Left lung (tissue), 14 donors: ENCODE measurements at regions of chr1 and their contacts with region 1.

Region 1: GRCh38 chr1:171984850-171985485 is 143.7 kb downstream of the DNM3 start:
- DNase-seq: peak in 2 of 4 donors; percentile 12 to 24
- ATAC-seq: peak; percentile 69
- H3K4me3 ChIP-seq: no peak overlapping the region
- H3K27ac ChIP-seq: no peak overlapping the region
- H3K4me1 ChIP-seq: no peaks in the 10 kb centered on the region
- H3K27me3 ChIP-seq: no peaks in the 10 kb centered on the region
- CTCF ChIP-seq: peak; percentile 58 to 71

Region 2: DNA sequence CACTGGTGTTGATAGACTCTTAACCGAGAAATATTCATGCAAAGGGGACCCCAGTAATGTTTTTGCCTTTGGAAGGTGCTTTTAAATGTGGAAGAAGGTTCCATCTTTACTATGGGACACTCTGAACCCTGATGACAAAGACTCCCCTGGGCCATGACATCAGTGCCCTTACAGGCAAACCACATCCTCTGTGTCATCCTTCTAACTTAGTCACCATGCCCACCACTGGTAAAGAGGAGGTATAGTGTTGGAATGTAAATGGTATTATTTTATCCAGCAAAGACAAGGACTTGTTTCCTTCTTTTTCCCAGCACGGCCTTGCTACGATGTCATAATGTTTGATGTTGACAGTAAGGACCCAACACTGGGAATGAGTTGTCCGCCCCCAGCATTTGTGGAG is 190.9 kb before region 1 on chr1:
- intact Hi-C with region 1: loop called in 1 of 2 experiments (anchors 10 kb)
- DNase-seq: no peak
- ATAC-seq: no peak
- H3K4me3 ChIP-seq: no peak overlapping the region
- H3K27ac ChIP-seq: no peak overlapping the region
- H3K4me1 ChIP-seq: no peaks in the 10 kb centered on the region
- H3K27me3 ChIP-seq: no peaks in the 10 kb centered on the region
- CTCF ChIP-seq: no peak

Region 3: GRCh38 chr1:171801487-171801891 is 183.5 kb before region 1 on chr1:
- intact Hi-C with region 1: loop called (anchors 5 to 10 kb)
- DNase-seq: peak in 1 of 4 donors; percentile 51
- ATAC-seq: peak; percentile 79
- H3K4me3 ChIP-seq: no peak overlapping the region
- H3K27ac ChIP-seq: no peak overlapping the region
- H3K4me1 ChIP-seq: peaks cover 0 to 19% of the 10 kb centered on the region in 2 donors
- H3K27me3 ChIP-seq: no peaks in the 10 kb centered on the region
- CTCF ChIP-seq: peak; percentile 60 to 77